ENCODE measurements at regions of chr18 and their contacts with region 1.

Region 1: GRCh38 chr18:12038639-12039417 is 54.8 kb upstream of the ANKRD62 start:
- DNase-seq: peak; percentile 25 to 91
- H3K4me3 ChIP-seq: peak overlapping the region; percentile 57 to 74
- H3K27ac ChIP-seq: no peak overlapping the region
- H3K4me1 ChIP-seq: no peaks in the 10 kb centered on the region
- H3K27me3 ChIP-seq: no peaks in the 10 kb centered on the region
- CTCF ChIP-seq: peak; percentile 95 to 100 (median 99)

Region 2: DNA sequence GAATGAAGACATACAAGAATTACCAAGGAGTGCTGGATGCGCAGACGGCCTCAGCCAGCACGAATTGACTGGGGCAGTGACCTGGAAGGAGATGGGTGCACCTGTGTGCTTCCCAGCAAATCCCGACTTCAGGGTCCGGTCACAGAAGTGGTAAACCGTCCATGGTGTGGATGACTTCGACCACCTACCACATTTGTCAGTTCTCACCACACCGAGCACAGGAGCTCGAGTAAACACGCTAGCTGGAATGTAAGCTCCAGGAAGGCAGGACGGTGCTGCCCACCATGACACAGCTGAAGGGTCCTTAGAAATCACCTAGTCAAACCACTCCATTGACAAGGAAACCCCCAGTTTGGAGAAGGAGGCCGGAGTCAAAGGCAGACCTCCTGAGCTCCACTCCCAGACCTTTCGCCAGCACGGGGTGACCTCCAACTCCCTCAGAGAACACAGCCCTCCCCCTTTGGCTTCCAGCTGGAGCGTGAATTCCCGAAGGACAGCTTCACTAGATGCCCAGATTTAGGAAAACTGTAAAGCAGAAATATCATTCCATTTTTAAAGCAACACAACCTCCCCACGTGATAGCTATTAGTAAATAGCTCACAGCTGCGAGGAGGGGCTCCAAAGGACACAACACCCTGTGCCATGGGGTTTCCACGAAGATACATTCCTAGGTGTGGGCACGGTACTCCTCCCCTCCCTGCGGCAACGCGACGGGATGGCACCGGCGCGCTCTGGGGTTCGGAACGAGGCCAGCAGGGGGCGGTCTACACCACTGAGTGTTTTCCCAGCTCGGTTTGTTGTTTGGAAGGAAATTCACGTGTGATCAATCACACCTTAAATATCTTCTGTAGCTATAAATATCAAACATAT is 383.9 kb before region 1 on chr18:
- intact Hi-C with region 1: loop called (anchors 5 kb)
- DNase-seq: no peak
- H3K4me3 ChIP-seq: no peak overlapping the region
- H3K27ac ChIP-seq: no peak overlapping the region
- H3K4me1 ChIP-seq: no peaks in the 10 kb centered on the region
- H3K27me3 ChIP-seq: no peaks in the 10 kb centered on the region
- CTCF ChIP-seq: peak; percentile 42 to 73 (median 70)

Region 3: DNA sequence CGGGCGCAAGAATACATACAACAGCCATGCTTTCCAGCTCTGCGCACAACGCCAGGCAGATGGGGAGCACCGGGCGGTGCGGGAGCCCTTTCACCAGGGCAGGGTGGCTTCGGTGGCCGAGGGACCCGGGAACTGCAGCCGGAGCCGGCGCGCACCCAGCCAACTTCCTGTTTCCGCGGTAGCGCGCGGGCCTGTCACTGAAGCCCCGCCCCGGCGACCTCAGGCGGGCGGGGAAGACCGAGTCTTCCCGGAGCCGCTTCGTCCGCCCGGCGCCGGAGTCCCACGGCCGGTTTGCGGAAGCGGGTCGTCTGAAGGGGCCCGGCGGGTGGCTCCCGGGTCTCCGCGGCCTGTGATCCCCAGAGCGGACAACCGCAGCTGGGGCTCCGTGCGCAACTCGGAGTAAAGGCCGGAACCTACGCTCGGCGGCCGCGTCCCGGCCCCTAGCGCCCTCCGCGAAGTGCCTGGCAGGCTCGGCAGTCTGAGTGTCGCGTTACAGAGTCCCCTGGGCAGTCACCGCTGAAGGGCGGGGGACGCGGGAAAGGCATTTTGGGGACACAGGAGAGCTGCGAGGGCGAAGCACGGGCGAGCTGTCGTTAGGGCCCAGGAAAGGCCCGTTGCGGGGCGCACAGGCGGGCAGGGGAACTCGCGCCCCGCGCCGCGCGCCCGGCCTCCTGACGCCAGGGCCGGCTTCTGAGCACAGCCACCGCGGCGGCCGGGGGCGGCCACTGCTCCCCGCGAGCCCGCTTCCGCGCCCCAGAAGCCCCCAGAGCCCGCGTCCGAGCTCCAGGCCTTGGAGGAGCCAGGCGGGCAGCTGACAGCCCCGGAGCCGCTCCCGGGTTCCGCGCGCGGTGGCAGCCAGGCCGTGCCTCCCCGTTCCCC is 130.4 kb before region 1 on chr18 and contains the start of gene MPPE1:
- intact Hi-C with region 1: loop called (anchors 1 kb)
- DNase-seq: peak; percentile 49 to 95
- H3K4me3 ChIP-seq: peak within 1 kb of the TSS; percentile 77 to 94
- H3K27ac ChIP-seq: peak within 1 kb of the TSS; percentile 99 to 100
- H3K4me1 ChIP-seq: peaks cover 0 to 10% of the 10 kb centered on the region in 2 donors
- H3K27me3 ChIP-seq: no peaks in the 10 kb centered on the region
- CTCF ChIP-seq: no peak
- total RNA-seq, gene MPPE1: 18.9 TPM

Region 4: DNA sequence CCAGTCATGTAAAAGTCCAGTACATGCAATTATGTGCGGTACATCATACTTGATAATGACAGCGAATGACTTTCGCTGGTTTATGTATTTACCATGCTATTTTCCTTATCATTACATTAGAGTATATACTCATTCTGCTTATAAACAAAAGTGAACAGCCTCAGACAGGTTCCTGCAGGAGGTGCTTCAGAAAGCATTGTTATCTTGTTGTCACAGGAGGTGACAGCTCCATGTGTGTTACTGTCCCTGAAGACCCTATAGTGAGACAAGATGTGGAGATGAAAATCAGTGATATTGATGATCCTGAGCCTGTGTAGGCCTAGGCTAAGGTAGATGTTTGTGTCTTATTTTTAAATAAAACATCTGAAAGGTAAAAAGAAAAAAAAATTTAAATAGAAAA is 115.4 kb before region 1 on chr18:
- intact Hi-C with region 1: no loop called
- DNase-seq: no peak
- H3K4me3 ChIP-seq: no peak overlapping the region
- H3K27ac ChIP-seq: no peak overlapping the region
- H3K4me1 ChIP-seq: no peaks in the 10 kb centered on the region
- H3K27me3 ChIP-seq: no peaks in the 10 kb centered on the region
- CTCF ChIP-seq: no peak